ENCODE measurements at regions of chr12 and their contacts with region 1.

Region 1: DNA sequence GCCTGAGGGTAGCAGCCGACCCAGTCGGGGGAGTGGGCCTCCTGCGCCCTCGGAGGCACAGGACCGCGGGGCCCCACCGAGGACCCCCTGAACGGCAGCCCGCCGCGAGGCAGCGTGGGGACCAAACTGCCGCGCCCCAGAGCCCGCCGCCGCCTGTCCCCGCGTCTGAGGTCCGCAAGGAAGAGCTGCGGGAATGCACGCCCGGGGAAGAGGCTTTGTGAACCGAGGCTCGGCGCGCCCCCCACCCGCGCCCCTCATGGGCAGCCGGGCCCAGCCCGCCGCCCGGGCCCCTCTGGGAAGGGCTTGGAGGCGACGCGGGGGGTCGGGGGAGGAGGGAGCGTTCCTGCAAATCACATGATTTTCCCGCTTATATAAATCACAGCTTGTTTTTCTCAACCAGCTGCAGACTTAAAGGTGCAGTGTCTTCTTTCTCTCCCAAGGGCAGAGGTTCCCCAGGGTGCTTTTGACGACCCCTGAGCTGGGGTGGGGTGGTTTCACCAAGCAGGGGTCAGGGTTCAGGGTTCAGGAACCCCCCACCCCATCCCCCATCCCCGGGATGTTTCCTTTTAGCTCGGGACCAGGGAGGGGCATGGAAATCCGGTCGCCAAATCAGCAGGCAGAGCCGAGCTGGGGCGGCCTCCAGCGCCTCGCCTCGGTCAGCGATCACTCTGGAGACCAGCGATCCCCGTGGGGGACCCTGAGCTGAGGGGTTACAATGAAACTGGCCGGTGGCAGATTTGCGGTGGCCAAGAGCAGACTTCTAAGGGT is 44.7 kb upstream of the ATP23 start:
- H3K4me3 ChIP-seq: peak overlapping the region; percentile 37
- H3K27ac ChIP-seq: peak overlapping the region; percentile 69; the same call in 1 of the 2 replicates
- H3K4me1 ChIP-seq: peaks cover 15% of the 10 kb centered on the region
- CTCF ChIP-seq: peak; percentile 32; the same call in 1 of the 2 replicates

Region 2: DNA sequence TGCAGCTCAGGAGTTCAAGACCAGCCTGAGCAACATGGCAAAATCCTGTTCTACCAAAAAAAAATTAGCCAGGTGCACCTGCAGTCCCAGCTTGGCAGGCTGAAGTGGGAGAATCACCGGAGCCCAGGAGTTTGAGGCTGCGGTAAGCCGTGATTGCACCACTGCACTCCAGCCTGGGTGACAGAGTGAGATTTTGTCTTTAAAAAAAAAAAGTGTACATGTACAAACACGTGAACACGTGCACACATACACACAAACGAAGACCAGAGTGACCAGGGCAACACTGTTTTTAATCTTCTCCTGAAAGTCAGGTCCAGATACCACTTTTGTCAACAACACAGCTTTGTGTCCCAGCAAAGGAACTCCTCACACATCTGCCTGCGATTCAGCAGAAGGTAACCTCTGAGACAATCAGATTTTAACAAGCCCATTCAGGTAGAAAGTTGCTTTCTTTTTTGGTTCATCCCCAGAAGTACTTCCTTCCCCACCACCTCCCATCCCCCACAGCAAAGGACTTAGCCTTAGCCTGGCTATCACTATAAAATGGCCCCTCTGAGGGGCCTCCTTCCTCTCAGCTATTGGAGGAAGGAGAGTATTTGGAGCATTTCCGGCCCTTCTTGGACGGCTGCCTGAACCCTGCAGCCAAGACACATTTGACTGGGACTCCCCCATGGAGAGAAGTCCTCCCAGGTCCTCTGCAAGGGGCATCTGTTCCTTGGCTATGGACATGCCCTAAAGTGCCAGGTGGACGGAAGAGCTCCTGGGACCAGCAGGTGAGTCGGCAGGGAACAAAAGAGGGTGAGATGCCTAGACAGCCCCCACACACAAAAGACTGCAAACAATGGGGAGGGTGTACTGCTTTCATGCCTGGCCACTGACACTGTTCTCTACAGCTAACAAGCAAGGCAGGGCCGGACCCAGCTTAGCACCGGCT is 59.9 kb before region 1 on chr12:
- CTCF ChIA-PET with region 1: interaction called, 120 read pairs
- POLR2A ChIA-PET with region 1: interaction called, 6 read pairs
- H3K4me3 ChIP-seq: no peak overlapping the region
- H3K27ac ChIP-seq: peak overlapping the region; percentile 12; the same call in 1 of the 2 replicates
- H3K4me1 ChIP-seq: peaks cover 46% of the 10 kb centered on the region
- CTCF ChIP-seq: no peak

Region 3: DNA sequence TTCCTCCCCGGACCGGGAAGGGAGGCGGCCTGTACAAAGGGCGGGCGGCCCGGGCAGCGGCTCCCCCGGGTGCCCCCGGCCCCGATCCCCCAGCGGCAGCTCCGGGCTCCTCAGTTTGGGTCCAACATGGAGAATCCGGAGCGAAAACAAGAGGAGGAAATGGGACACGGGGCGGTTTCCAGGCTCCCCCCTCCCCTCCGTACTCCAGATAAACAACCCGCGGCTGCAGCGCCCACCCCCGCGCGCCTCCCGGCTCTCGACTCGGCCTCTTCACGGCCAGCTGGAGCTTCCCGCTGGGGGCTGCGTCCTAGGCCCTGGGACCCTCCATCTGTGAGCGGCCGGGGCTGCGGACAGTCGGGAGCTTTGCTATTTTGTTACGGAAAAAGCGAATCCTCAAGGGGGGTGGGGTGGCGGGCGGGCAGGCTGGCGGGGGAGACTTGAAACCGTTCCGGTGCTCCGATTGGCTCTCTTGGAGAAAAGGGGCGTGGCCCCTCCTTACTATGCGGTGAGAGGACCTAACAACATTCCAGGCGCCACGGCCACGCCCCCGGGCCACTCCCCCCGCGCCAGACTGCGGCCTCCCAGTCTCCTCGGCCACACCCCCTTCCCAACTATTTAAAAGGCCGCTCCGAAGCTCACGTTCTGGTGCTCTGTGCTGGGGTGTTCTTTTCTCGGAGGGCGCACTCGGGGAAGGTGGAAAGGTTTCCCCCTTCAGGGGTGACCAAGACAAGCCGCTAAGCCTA is 49.9 kb before region 1 on chr12 and contains the start of gene CTDSP2:
- CTCF ChIA-PET with region 1: interaction called, 7 read pairs
- POLR2A ChIA-PET with region 1: interaction called, 61 read pairs
- H3K4me3 ChIP-seq: peak within 1 kb of the TSS; percentile 96
- H3K27ac ChIP-seq: peak within 1 kb of the TSS; percentile 95
- H3K4me1 ChIP-seq: peaks cover 14% of the 10 kb centered on the region; the same call in 1 of the 2 replicates
- CTCF ChIP-seq: no peak

Region 4: DNA sequence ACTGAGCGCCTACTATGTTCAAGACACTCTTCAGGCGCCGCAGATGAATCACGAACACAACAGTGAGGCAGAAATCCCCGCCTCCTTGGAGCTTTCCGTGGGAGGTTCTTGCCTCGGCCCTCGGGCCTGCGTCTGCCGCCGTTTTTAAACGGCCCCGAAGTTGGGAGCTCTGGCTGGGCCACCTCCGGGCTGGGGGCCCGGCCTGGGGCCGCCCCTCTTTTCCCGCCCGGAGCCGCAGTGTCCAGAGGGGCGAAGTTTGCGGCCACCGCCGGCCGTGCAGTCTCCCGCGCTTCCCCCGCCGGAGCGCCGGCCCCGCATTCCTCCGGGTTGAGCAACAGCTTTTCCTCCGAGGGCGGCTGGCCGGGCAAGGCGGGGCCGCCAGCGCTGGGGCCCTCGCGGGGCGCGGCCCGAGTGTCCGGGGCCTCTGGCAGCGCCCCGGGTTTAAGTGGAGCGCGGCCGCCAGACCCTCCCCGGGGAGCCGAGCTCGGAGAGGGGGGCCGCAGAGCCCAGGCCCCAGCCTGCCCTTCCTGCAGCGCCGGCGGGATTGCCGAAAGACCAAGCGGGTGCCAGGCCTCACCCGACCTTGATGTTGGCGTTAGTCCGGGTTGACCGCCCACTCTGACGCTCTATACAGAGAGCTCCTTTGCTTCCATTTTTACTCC is 31.4 kb before region 1 on chr12:
- CTCF ChIA-PET with region 1: interaction called, 3 read pairs
- POLR2A ChIA-PET with region 1: interaction called, 20 read pairs
- H3K4me3 ChIP-seq: peak overlapping the region; percentile 37
- H3K27ac ChIP-seq: peak overlapping the region; percentile 62; the same call in 1 of the 2 replicates
- H3K4me1 ChIP-seq: no peaks in the 10 kb centered on the region
- CTCF ChIP-seq: no peak

Region 5: DNA sequence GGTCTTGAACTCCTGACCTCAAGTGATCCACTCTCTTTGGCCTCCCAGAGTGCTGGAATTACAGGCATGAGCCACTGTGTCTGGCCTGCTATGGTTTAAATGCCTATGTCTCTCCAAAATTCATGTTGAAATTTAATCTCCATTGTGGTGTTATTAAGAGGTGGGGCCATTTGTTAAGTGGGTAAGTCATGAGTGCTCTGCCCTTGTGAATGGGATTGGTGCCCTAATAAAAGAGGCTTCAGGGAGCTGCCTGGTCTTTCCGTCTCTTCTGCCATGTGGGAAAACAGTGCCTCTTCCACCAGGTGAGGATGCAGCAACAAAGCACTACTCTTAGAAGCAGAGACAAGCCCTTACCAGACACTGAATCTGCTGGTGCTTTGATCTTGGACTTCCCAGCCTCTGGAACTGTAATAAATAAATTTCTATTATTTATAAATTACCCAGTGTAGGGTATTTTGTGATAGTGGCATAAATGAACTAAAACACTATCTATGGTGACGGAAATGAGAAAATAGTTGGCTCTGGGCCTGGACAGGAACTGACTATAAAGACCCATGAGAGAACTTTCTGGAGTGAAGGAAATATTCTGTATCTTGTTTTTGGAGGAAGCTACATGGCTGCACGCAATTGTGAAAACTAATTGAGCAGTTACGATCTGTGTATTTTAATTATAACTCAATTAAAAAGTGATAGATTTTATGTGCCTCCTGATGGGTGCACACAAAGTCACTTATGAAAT is 32.6 kb after region 1 on chr12:
- CTCF ChIA-PET with region 1: no interaction called
- POLR2A ChIA-PET with region 1: no interaction called
- H3K4me3 ChIP-seq: no peak overlapping the region
- H3K27ac ChIP-seq: no peak overlapping the region
- H3K4me1 ChIP-seq: no peaks in the 10 kb centered on the region
- CTCF ChIP-seq: no peak

Region 6: DNA sequence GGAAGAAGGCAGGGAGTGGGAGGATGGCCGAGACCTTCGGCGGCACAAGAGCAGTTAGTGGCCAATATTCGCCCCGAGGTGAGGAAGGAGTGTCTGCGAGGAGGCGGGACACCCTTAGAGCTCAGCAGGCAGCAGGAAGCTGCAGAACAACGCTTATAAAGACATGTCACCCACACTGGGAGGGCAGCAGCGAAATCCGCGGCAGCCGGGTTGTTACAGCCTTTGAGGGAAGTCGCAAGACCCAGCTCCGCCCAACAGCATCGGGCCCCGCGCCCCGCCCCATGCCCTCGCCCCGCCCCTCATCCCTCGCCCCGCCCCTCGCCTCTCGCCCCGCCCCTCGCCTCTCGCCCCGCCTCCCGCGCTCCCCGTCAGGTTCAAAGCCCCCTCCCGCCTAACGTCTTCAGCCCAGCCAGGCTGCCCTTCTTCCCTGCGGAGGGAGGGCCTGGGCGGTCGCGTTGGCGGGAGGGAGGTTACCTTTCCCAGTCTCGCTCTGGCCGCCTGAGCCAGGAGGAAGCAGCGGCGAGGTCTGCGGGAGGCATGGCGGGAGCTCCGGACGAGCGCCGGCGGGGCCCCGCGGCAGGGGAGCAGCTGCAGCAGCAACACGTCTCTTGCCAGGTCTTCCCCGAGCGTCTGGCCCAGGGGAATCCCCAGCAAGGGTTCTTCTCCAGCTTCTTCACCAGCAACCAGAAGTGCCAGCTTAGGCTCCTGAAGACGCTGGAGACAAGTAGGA is 44.7 kb after region 1 on chr12 and contains the start of gene ATP23:
- CTCF ChIA-PET with region 1: interaction called, 4 read pairs
- POLR2A ChIA-PET with region 1: interaction called, 22 read pairs
- H3K4me3 ChIP-seq: peak within 1 kb of the TSS; percentile 73
- H3K27ac ChIP-seq: peak within 1 kb of the TSS; percentile 75
- H3K4me1 ChIP-seq: 0 out of 2 replicates have a peak, but pooled peaks cover 2% of the 10 kb centered on the region
- CTCF ChIP-seq: no peak

Region 7: DNA sequence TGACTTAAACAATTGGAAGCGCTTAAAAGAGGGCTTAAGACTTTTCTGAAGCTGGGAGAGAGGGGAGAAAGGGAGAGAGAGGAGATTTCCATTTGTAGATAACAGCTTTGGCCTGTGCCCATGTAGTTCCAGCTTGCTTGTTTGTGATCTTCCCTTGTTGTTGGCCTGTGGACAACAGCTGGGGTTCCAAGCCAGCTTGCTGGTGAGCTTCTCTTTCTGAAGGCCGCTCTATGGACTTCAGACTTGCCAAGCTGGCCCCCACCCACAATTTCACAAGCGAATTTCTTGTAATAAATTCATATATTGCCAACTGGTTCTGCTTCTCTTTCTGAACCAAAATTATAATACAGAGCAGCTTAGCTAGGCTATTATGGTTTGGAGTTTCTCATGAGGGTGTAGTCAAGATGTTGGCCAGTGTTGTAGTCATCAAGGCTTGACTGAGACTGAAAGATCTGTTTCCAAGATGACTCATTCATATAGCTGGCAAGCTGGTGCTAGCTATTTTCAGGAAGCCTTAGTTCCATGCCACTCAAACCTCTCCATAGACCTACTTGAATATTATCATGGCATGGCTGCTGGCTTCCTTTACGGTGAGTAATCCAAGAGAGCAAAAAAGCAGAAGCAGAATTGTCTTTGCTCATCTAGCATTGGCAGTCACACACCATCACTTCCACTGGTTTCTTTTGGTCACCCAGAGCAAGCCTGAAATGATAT is 134.1 kb after region 1 on chr12:
- CTCF ChIA-PET with region 1: no interaction called
- POLR2A ChIA-PET with region 1: no interaction called
- H3K4me3 ChIP-seq: no peak overlapping the region
- H3K27ac ChIP-seq: no peak overlapping the region
- H3K4me1 ChIP-seq: no peaks in the 10 kb centered on the region
- CTCF ChIP-seq: no peak

Region 8: GRCh38 chr12:58148405-58148804 is 251.8 kb after region 1 on chr12:
- CTCF ChIA-PET with region 1: no interaction called
- POLR2A ChIA-PET with region 1: no interaction called
- H3K4me3 ChIP-seq: no peak overlapping the region
- H3K27ac ChIP-seq: no peak overlapping the region
- H3K4me1 ChIP-seq: no peaks in the 10 kb centered on the region
- CTCF ChIP-seq: no peak